Thyroid gland (tissue), 4 donors: ENCODE measurements at regions of chr12 and their contacts with region 1.

Region 1: DNA sequence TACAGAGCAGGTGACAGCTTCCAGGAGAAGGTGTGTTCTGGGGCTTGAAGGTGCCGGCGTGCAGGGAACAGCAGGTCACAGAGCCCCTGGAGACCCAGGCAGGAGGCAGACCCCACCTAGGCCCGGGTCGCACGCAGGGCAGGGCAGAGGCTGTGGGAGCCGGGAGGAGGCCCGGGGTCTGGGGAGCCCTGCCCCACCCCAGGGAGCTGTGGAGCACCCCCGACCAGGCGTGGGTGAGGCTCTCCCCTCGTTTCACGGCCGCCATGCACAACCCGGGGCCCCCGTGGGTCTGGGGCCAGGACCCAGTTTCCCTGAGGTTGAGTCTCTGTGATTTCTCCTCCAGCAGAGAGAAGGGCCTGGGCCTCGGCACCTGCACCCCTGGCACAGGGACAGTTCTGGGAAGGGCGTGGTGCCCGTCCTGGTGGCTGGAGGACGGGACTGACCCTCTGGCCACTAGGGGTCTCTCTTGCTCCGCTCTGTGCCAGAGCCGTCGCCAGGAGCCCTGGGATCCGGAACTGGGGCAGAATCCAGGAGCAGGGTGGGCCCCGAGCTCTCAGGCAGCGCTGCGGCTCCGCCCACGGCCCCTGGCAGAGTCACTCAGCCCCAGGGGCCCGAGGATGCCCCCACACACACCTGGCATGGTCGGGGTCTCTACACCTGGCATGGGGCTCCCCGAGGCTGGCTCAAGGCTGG is 75.2 kb upstream of the FBRSL1 start:
- DNase-seq: peak; percentile 79 to 83
- H3K4me3 ChIP-seq: no peak overlapping the region
- H3K27ac ChIP-seq: no peak overlapping the region
- H3K4me1 ChIP-seq: peaks cover 0 to 4% of the 10 kb centered on the region in 2 donors
- H3K27me3 ChIP-seq: no peaks in the 10 kb centered on the region
- CTCF ChIP-seq: peak; percentile 75 to 96 (median 88)
- POLR2A ChIP-seq: no peak

Region 2: GRCh38 chr12:132523576-132524331 is 109.0 kb after region 1 on chr12:
- intact Hi-C with region 1: loop called (anchors 5 kb)
- DNase-seq: peak; percentile 73
- H3K4me3 ChIP-seq: no peak overlapping the region
- H3K27ac ChIP-seq: no peak overlapping the region
- H3K4me1 ChIP-seq: peaks cover 50 to 54% of the 10 kb centered on the region in 2 donors
- H3K27me3 ChIP-seq: no peaks in the 10 kb centered on the region
- CTCF ChIP-seq: peak; percentile 34 to 75 (median 58)
- POLR2A ChIP-seq: no peak

Region 3: GRCh38 chr12:132614861-132615578 is 200.2 kb after region 1 on chr12:
- intact Hi-C with region 1: loop called (anchors 2 kb)
- DNase-seq: peak; percentile 76 to 84
- H3K4me3 ChIP-seq: no peak overlapping the region
- H3K27ac ChIP-seq: no peak overlapping the region
- H3K4me1 ChIP-seq: peaks cover 5 to 11% of the 10 kb centered on the region in 2 donors
- H3K27me3 ChIP-seq: peaks cover 25% of the 10 kb centered on the region
- CTCF ChIP-seq: peak; percentile 41 to 82 (median 70)
- POLR2A ChIP-seq: no peak